Endothelial cell of umbilical vein (primary cell): ENCODE measurements at regions of chr5 and their contacts with region 1.

Region 1: GRCh38 chr5:87151547-87151946 is 116.1 kb upstream of the RASA1 start:
- DNase-seq: peak; percentile 78
- H3K4me3 ChIP-seq: no peak overlapping the region
- H3K27ac ChIP-seq: peak overlapping the region; percentile 82
- H3K4me1 ChIP-seq: peaks cover 31% of the 10 kb centered on the region
- H3K27me3 ChIP-seq: no peaks in the 10 kb centered on the region
- CTCF ChIP-seq: no peak
- POLR2A ChIP-seq: no peak

Region 2: DNA sequence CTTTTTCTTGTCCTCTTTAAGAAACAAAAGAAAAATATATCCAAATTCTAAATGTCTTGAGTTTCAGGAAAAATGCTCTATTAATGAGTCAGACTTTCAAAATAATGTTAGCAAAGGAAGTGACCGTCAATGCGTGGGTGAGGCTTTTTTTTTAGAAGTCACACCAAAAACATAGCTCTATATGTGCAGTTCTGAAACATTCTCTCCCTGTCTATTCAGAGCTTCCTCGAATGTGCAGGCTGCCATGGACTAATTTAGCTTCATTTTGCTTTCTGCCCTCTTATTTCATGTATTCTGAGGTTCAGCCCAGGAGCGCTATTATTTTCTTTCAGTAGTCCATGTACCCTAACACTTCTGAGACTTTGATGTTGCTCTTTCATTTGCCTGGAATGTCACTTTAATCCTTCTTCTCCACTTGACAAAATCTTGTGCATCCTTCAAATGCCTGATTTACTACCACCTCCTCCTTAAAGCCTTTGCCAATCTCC is 43.6 kb after region 1 on chr5:
- CTCF ChIA-PET with region 1: interaction called, 13 read pairs
- POLR2A ChIA-PET with region 1: no interaction called
- dilution Hi-C with region 1: no loop called
- intact Hi-C with region 1: loop called (anchors 1 kb)
- DNase-seq: peak; percentile 85
- H3K4me3 ChIP-seq: peak overlapping the region in 1 of 3 experiments; percentile 40
- H3K27ac ChIP-seq: peak overlapping the region; percentile 98
- H3K4me1 ChIP-seq: peaks cover 25% of the 10 kb centered on the region
- H3K27me3 ChIP-seq: no peaks in the 10 kb centered on the region
- CTCF ChIP-seq: no peak
- POLR2A ChIP-seq: no peak

Region 3: GRCh38 chr5:87393331-87393730 is 241.8 kb after region 1 on chr5:
- CTCF ChIA-PET with region 1: no interaction called
- POLR2A ChIA-PET with region 1: no interaction called
- dilution Hi-C with region 1: no loop called
- intact Hi-C with region 1: loop called (anchors 5 kb)
- DNase-seq: peak; percentile 79
- H3K4me3 ChIP-seq: no peak overlapping the region
- H3K27ac ChIP-seq: peak overlapping the region; percentile 91
- H3K4me1 ChIP-seq: peaks cover 25% of the 10 kb centered on the region
- H3K27me3 ChIP-seq: no peaks in the 10 kb centered on the region
- CTCF ChIP-seq: no peak
- POLR2A ChIP-seq: no peak